T-cell (primary cell): ENCODE measurements at regions of chr12 and their contacts with region 1.

Region 1: GRCh38 chr12:20656600-20656999 is 38.5 kb upstream of the SLCO1C1 start:
- DNase-seq: no peak
- ATAC-seq: no peak
- H3K4me3 ChIP-seq: no peak overlapping the region
- H3K4me3 Mint-ChIP-seq: no peak overlapping the region
- H3K27ac ChIP-seq: no peak overlapping the region
- H3K27ac Mint-ChIP-seq: no peak overlapping the region
- H3K4me1 ChIP-seq: no peaks in the 10 kb centered on the region
- H3K4me1 Mint-ChIP-seq: no peaks in the 10 kb centered on the region
- H3K27me3 ChIP-seq: no peaks in the 10 kb centered on the region
- H3K27me3 Mint-ChIP-seq: no peaks in the 10 kb centered on the region

Region 2: DNA sequence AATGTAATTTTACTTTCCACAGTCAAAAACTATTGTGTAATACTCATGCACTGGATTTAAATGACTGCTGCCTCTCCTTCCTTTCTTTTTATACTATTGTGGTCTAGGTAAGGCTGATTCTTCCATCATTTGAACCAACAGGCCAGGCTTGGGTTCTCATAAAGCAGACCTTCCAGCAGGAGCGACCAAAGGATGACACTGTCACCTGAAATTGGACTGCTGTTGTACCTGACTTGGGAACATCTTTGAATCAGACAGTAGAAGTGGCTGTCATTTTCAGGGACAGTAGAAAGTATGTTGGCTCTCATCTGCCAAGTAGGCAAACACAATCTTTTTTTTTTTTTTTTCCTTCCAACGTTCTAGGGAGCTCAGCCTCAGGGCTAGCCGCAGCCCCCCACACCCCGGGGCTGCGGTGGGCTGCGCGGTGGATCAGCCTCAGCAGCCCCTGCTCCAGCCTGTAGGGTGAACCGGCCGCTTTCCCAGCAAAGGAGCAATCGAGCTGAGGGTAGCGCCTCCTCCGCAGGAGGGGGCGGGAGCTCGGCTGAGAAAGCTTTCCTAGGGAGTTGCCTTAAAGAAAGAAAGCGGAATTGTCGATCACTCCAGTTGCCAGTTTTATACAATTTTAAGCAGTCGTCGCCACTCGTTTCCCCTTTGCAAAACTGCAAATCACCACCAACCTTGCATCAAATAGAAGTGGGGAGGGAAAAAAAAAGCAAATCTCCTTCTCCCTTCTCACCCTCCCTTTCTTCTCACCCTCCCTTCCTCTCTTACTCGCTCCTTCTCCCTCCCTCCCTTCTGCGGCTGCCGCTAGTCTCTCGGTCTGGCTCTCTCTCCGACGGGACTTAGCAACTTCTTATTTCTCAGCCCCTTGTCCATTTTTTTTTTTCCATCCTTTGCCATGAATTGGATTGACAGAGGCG is 288.6 kb before region 1 on chr12 and contains the start of gene PDE3A:
- CTCF ChIA-PET with region 1: no interaction called
- POLR2A ChIA-PET with region 1: interaction called in 1 of 2 experiments, 13 read pairs
- DNase-seq: no peak
- ATAC-seq: no peak
- H3K4me3 ChIP-seq: peak within 1 kb of the TSS in 1 of 2 donors; percentile 55
- H3K4me3 Mint-ChIP-seq: peak within 1 kb of the TSS in 2 of 3 donors; percentile 17 to 47
- H3K27ac ChIP-seq: no peak within 1 kb of the TSS
- H3K27ac Mint-ChIP-seq: peak within 1 kb of the TSS in 1 of 2 donors; percentile 57
- H3K4me1 ChIP-seq: peaks cover 5 to 6% of the 10 kb centered on the region in 2 experiments
- H3K4me1 Mint-ChIP-seq: peaks cover 0 to 14% (median 13%) of the 10 kb centered on the region in 3 donors
- H3K27me3 ChIP-seq: peaks cover 12 to 26% of the 10 kb centered on the region in 2 experiments
- H3K27me3 Mint-ChIP-seq: peaks cover 37 to 41% of the 10 kb centered on the region in 2 donors
- total RNA-seq, gene PDE3A: 0.03 to 0.10 (median 0.09) TPM in 3 of 5 donors, not detected in the others

Region 3: GRCh38 chr12:20415028-20415427 is 241.6 kb before region 1 on chr12:
- CTCF ChIA-PET with region 1: no interaction called
- POLR2A ChIA-PET with region 1: no interaction called
- DNase-seq: no peak
- ATAC-seq: no peak
- H3K4me3 ChIP-seq: no peak overlapping the region
- H3K4me3 Mint-ChIP-seq: no peak overlapping the region
- H3K27ac ChIP-seq: no peak overlapping the region
- H3K27ac Mint-ChIP-seq: no peak overlapping the region
- H3K4me1 ChIP-seq: no peaks in the 10 kb centered on the region
- H3K4me1 Mint-ChIP-seq: no peaks in the 10 kb centered on the region
- H3K27me3 ChIP-seq: no peaks in the 10 kb centered on the region
- H3K27me3 Mint-ChIP-seq: no peaks in the 10 kb centered on the region

Region 4: GRCh38 chr12:20722142-20722541 is 65.5 kb after region 1 on chr12:
- CTCF ChIA-PET with region 1: no interaction called
- POLR2A ChIA-PET with region 1: no interaction called
- DNase-seq: no peak
- ATAC-seq: no peak
- H3K4me3 ChIP-seq: no peak overlapping the region
- H3K4me3 Mint-ChIP-seq: no peak overlapping the region
- H3K27ac ChIP-seq: no peak overlapping the region
- H3K27ac Mint-ChIP-seq: no peak overlapping the region
- H3K4me1 ChIP-seq: no peaks in the 10 kb centered on the region
- H3K4me1 Mint-ChIP-seq: no peaks in the 10 kb centered on the region
- H3K27me3 ChIP-seq: no peaks in the 10 kb centered on the region
- H3K27me3 Mint-ChIP-seq: no peaks in the 10 kb centered on the region

Region 5: GRCh38 chr12:21925296-21925913 is 1268.8 kb after region 1 on chr12:
- CTCF ChIA-PET with region 1: no interaction called
- POLR2A ChIA-PET with region 1: no interaction called
- DNase-seq: no peak
- ATAC-seq: no peak
- H3K4me3 ChIP-seq: no peak overlapping the region
- H3K4me3 Mint-ChIP-seq: no peak overlapping the region
- H3K27ac ChIP-seq: no peak overlapping the region
- H3K27ac Mint-ChIP-seq: no peak overlapping the region
- H3K4me1 ChIP-seq: no peaks in the 10 kb centered on the region
- H3K4me1 Mint-ChIP-seq: no peaks in the 10 kb centered on the region
- H3K27me3 ChIP-seq: peaks cover 0 to 3% of the 10 kb centered on the region in 2 experiments
- H3K27me3 Mint-ChIP-seq: peaks cover 9 to 21% of the 10 kb centered on the region in 2 donors